A673 (cell line): ENCODE measurements at regions of chr15 and their contacts with region 1.

Region 1: DNA sequence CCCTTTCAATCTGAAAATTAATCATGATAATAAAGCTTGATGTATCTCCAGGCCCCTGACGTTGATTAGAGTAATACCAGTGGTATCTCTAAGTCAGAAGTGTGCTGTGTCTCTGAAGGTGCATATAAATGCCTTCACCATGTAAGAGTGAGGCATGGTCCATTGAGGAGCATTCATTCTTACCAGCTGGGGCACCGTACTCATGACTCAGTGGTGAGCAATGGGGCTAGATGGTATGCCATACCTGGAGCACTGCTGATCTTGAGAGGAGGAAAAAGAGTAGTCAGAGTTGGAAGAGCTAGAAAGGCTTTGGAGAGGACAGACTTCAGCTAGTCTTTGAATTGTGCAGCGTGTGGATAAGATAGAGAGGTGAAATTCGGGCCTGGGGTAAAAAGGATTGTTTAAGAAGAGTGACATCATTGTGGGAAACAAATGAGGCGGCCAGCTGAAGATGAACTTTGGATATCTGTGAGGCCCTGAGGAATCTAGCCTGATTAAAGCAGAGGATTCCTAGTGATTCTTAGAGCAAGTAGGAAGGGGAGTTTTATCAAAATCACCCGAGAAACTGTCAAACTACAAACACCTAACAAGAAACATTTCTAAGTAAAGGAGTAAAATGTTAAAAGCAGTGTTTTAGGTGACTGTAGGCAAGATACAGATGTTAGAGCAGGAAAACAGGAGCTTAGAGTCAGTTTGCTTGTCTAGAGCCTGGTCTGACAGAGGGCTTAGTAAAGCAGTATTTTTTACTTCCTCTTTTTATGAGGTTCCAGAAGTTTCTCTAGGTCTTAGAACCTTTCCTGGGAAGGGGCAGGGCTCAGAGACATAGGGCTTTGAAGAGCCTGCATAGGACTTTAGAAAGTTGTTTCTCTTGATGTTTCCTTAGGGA is 13.6 kb downstream of the TMOD3 start:
- DNase-seq: no peak
- H3K4me3 ChIP-seq: no peak overlapping the region
- H3K27ac ChIP-seq: peak overlapping the region; percentile 79
- H3K4me1 ChIP-seq: peaks cover 89% of the 10 kb centered on the region
- H3K27me3 ChIP-seq: no peaks in the 10 kb centered on the region
- CTCF ChIP-seq: no peak

Region 2: GRCh38 chr15:50315814-50316630 is 1527.1 kb before region 1 on chr15:
- CTCF ChIA-PET with region 1: no interaction called
- POLR2A ChIA-PET with region 1: interaction called, 10 read pairs
- intact Hi-C with region 1: no loop called
- DNase-seq: peak; percentile 56
- H3K4me3 ChIP-seq: no peak overlapping the region
- H3K27ac ChIP-seq: no peak overlapping the region
- H3K4me1 ChIP-seq: peaks cover 10% of the 10 kb centered on the region
- H3K27me3 ChIP-seq: no peaks in the 10 kb centered on the region
- CTCF ChIP-seq: peak; percentile 78

Region 3: GRCh38 chr15:51829360-51830275 is 13.5 kb before region 1 on chr15 and contains the start of gene TMOD3:
- CTCF ChIA-PET with region 1: no interaction called
- POLR2A ChIA-PET with region 1: no interaction called
- intact Hi-C with region 1: no loop called
- DNase-seq: peak; percentile 95
- H3K4me3 ChIP-seq: peak within 1 kb of the TSS; percentile 80
- H3K27ac ChIP-seq: peak within 1 kb of the TSS; percentile 84
- H3K4me1 ChIP-seq: peaks cover 26% of the 10 kb centered on the region
- H3K27me3 ChIP-seq: no peaks in the 10 kb centered on the region
- CTCF ChIP-seq: no peak
- total RNA-seq, gene TMOD3: 66.6 and 70.2 TPM in 2 replicates